HCT116 (cell line): ENCODE measurements at regions of chr6 and their contacts with region 1.

Region 1: DNA sequence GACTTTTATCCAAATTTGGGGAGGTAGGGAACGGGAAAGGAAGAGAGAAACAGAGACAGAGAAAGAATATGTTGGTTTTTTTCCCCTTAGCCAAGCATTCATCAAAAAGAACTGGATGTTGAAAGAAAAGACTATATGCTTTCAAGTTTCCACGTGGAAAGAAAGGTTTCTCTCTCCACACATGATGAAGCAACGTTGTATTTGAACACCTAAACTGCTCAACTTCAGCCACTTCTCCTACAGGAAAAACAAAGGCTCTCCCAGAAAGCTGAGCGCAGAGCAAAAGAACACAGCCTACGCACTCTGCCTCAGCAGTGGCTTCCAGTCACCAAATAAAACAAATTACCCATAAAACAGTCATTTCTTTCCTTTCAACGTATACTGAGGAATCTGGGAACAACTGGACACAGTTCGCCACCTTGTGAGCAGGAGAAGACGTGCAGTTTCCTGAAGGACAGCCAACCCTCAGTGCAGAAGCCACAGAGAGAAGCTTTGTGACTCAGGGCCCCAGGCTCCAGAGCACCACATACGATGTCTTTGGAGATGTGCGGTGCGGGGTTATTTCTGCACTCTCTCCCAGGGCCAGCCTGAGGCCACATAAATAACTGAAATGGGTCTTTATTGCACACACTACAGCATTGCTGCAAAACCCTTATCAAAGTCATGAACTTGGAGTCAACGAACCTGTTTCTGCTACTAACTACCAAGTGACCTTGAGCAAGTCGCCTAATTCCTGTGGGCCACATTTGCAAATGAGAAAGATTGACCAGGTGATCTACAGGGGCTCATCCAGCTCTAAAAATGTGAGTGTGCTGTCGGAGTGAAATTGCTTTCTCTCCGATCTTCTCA is 10.1 kb downstream of the IL17F start:
- DNase-seq: peak; percentile 52
- ATAC-seq: peak; percentile 99
- H3K4me3 ChIP-seq: no peak overlapping the region
- H3K27ac ChIP-seq: no peak overlapping the region
- H3K4me1 ChIP-seq: peaks cover 0 to 7% of the 10 kb centered on the region in 2 experiments; a peak in 2 of 4 replicates
- H3K27me3 ChIP-seq: no peaks in the 10 kb centered on the region
- CTCF ChIP-seq: peak; percentile 62 to 77 (median 72); a peak in 5 of 6 replicates
- POLR2A ChIP-seq: no peak
- RAD21 ChIP-seq: peak; percentile 80

Region 2: GRCh38 chr6:51855310-51856082 is 378.7 kb before region 1 on chr6:
- CTCF ChIA-PET with region 1: no interaction called
- POLR2A ChIA-PET with region 1: no interaction called
- RAD21 ChIA-PET with region 1: no interaction called
- intact Hi-C with region 1: no loop called
- DNase-seq: peak; percentile 41
- ATAC-seq: peak; percentile 73
- H3K4me3 ChIP-seq: no peak overlapping the region
- H3K27ac ChIP-seq: no peak overlapping the region
- H3K4me1 ChIP-seq: no peaks in the 10 kb centered on the region
- H3K27me3 ChIP-seq: no peaks in the 10 kb centered on the region
- CTCF ChIP-seq: peak; percentile 34 to 81 (median 63); a peak in 4 of 6 replicates
- POLR2A ChIP-seq: no peak
- RAD21 ChIP-seq: peak; percentile 39; the same call in 1 of the 2 replicates

Region 3: GRCh38 chr6:52063584-52064344 is 170.4 kb before region 1 on chr6:
- CTCF ChIA-PET with region 1: no interaction called
- POLR2A ChIA-PET with region 1: no interaction called
- RAD21 ChIA-PET with region 1: no interaction called
- intact Hi-C with region 1: loop called (anchors 2 kb)
- DNase-seq: peak; percentile 35
- ATAC-seq: peak; percentile 90
- H3K4me3 ChIP-seq: no peak overlapping the region
- H3K27ac ChIP-seq: no peak overlapping the region
- H3K4me1 ChIP-seq: 0 out of 4 replicates have a peak, but pooled peaks cover 0 to 2% of the 10 kb centered on the region in 2 experiments
- H3K27me3 ChIP-seq: peaks cover 6% of the 10 kb centered on the region; the same call in 1 of the 2 replicates
- CTCF ChIP-seq: peak in 2 of 3 experiments; percentile 66 to 75; a peak in 4 of 6 replicates
- POLR2A ChIP-seq: no peak
- RAD21 ChIP-seq: peak; percentile 28